ENCODE measurements at regions of chr10 and their contacts with region 1.

Region 1: GRCh38 chr10:26621889-26622711 is 75.4 kb upstream of the PDSS1 start:
- DNase-seq: peak; percentile 63
- H3K4me3 Mint-ChIP-seq: peak overlapping the region; percentile 44
- H3K27ac Mint-ChIP-seq: no peak overlapping the region
- H3K4me1 Mint-ChIP-seq: peaks cover 9% of the 10 kb centered on the region
- H3K27me3 Mint-ChIP-seq: peaks cover 4% of the 10 kb centered on the region

Region 2: GRCh38 chr10:26410404-26410803 is 211.7 kb before region 1 on chr10:
- CTCF ChIA-PET with region 1: no interaction called
- intact Hi-C with region 1: no loop called
- DNase-seq: no peak
- H3K4me3 Mint-ChIP-seq: no peak overlapping the region
- H3K27ac Mint-ChIP-seq: no peak overlapping the region
- H3K4me1 Mint-ChIP-seq: no peaks in the 10 kb centered on the region
- H3K27me3 Mint-ChIP-seq: no peaks in the 10 kb centered on the region

Region 3: DNA sequence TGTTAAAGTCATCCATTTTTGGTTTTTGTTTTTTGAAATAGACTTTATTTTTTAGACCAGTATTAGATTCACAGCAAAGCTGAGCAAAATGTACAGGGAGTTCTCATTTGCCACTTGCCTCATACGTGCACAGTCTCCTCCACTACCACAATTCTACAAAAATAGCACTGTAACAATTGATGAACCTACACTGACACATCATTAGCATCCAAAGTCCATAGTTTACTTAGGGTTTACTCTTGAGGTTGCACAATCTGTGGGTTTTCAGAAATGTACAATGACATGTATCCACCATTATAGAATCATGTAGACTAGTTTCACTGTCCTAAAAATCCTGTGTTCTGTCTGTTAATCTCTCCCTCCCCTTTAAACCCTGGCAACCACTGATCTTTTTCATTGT is 50.4 kb before region 1 on chr10:
- CTCF ChIA-PET with region 1: no interaction called
- intact Hi-C with region 1: loop called (anchors 1 kb)
- DNase-seq: no peak
- H3K4me3 Mint-ChIP-seq: no peak overlapping the region
- H3K27ac Mint-ChIP-seq: no peak overlapping the region
- H3K4me1 Mint-ChIP-seq: peaks cover 4% of the 10 kb centered on the region
- H3K27me3 Mint-ChIP-seq: no peaks in the 10 kb centered on the region

Region 4: GRCh38 chr10:26586211-26586610 is 35.9 kb before region 1 on chr10:
- CTCF ChIA-PET with region 1: no interaction called
- intact Hi-C with region 1: no loop called
- DNase-seq: no peak
- H3K4me3 Mint-ChIP-seq: no peak overlapping the region
- H3K27ac Mint-ChIP-seq: no peak overlapping the region
- H3K4me1 Mint-ChIP-seq: no peaks in the 10 kb centered on the region
- H3K27me3 Mint-ChIP-seq: no peaks in the 10 kb centered on the region

Region 5: DNA sequence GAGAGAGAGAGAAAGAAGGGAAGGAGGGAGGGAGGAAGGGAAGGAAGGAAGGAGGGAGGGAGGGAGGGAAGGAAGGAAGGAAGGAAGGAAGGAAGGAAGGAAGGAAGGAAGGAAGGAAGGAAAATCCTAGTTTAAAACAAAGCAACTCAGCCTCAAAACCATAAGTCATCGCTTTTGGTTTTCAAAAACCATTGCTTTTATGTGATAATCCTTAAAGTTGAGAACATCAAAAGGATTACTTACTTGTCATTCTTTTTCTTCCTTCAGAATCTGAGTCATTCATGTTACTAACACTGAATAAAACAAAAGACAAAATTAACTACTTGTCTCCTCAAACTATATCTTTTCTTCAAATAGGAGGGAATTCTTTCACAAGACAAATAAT is 53.8 kb after region 1 on chr10:
- CTCF ChIA-PET with region 1: no interaction called
- intact Hi-C with region 1: loop called (anchors 5 kb)
- DNase-seq: no peak
- H3K4me3 Mint-ChIP-seq: no peak overlapping the region
- H3K27ac Mint-ChIP-seq: no peak overlapping the region
- H3K4me1 Mint-ChIP-seq: peaks cover 4% of the 10 kb centered on the region
- H3K27me3 Mint-ChIP-seq: no peaks in the 10 kb centered on the region